Activated naive CD4-positive, alpha-beta T cell treated with anti-CD3 and anti-CD28 coated beads, Interleukin-2, amount 10 ng/mL, durations not matched to agents 7 days and 5 days (primary cell): ENCODE measurements at regions of chr11 and their contacts with region 1.

Region 1: DNA sequence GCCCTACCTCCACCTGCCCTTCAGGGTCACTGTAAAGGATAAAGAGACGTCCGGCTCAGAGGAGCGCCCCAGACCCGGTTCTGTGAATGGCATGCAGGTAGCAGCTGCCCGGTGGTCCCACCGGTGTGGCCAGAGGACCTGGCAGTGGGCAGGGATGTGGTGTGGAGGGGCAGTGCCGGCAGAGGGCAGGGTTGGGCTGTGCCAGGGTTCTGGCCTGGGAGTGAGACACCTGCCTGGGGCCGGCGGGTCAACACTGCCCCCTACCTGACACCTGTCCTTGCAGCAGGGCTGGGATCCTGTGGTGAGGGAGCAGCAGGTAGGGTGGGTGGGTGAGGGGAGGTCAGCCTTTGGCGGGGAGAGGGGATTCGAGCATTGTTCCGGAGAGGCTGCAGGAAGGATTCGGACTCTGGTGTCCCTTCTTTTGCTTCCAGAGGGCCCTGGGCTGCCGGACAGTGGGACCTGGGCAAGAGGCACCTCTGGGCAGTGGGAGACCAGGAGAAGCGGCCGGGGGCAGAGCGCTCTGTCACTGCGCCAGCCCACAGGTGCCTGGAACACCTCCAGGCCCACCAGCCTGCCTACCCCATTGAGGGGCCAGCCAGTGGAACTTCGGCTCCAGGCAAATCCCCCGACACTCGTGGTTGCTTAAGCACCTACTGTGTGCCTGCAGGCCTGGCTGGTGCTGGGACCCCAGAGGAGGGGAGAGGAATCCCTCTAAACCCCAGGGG is 1.6 kb upstream of the PHLDA2 start:
- DNase-seq: peak; percentile 62
- H3K4me3 Mint-ChIP-seq: peak overlapping the region; percentile 51
- H3K27ac Mint-ChIP-seq: no peak overlapping the region
- H3K4me1 Mint-ChIP-seq: peaks cover 40% of the 10 kb centered on the region
- H3K27me3 Mint-ChIP-seq: peaks cover 73% of the 10 kb centered on the region

Region 2: GRCh38 chr11:2420502-2421225 is 510.2 kb before region 1 on chr11:
- CTCF ChIA-PET with region 1: no interaction called
- DNase-seq: peak; percentile 80
- H3K4me3 Mint-ChIP-seq: no peak overlapping the region
- H3K27ac Mint-ChIP-seq: no peak overlapping the region
- H3K4me1 Mint-ChIP-seq: peaks cover 3% of the 10 kb centered on the region
- H3K27me3 Mint-ChIP-seq: no peaks in the 10 kb centered on the region

Region 3: DNA sequence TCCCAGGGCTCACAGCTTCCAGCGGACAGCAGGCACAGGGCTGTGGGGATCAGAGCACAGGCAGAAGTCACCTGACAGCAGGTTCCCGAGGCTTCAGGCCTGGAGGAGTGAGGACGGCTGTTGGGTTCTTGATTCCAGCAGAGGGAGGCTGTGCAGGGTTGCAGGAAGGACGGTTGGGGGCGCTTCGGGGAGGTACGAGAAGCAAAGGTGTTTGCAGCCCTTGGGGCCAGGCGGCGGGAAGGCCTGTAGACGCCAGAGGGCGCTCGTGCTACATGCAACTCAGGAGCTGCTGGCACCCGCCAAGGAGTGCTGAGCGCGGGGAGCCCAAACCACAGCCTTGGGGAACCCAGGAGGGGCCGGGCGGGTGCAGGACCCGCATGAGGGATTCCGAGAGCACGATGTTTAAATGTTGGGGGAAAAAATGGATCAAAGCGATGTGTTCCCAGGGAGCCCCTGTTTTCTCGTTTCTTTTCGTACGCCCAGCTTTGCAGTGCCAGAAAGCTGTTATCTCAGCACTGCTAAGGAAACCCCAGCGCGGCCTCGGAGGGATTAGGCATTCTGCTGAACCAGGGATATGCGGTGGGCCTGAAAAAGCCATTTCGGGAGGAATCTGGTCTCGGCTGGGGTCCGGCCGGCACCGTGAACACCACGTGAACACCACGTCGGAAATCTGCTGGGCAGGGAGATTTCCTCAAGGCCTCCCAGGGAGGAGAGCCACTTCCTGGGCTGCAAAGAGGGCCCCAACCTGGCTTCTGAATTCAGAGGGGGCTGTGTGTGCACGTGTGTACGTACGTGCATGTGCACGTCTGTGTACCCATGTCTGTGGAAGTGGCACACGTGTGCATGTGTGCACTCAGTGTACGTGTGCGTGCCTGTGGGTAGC is 397.9 kb before region 1 on chr11:
- CTCF ChIA-PET with region 1: interaction called, 16 read pairs
- DNase-seq: peak; percentile 95
- H3K4me3 Mint-ChIP-seq: peak overlapping the region; percentile 40
- H3K27ac Mint-ChIP-seq: peak overlapping the region; percentile 76
- H3K4me1 Mint-ChIP-seq: peaks cover 19% of the 10 kb centered on the region
- H3K27me3 Mint-ChIP-seq: peaks cover 5% of the 10 kb centered on the region

Region 4: DNA sequence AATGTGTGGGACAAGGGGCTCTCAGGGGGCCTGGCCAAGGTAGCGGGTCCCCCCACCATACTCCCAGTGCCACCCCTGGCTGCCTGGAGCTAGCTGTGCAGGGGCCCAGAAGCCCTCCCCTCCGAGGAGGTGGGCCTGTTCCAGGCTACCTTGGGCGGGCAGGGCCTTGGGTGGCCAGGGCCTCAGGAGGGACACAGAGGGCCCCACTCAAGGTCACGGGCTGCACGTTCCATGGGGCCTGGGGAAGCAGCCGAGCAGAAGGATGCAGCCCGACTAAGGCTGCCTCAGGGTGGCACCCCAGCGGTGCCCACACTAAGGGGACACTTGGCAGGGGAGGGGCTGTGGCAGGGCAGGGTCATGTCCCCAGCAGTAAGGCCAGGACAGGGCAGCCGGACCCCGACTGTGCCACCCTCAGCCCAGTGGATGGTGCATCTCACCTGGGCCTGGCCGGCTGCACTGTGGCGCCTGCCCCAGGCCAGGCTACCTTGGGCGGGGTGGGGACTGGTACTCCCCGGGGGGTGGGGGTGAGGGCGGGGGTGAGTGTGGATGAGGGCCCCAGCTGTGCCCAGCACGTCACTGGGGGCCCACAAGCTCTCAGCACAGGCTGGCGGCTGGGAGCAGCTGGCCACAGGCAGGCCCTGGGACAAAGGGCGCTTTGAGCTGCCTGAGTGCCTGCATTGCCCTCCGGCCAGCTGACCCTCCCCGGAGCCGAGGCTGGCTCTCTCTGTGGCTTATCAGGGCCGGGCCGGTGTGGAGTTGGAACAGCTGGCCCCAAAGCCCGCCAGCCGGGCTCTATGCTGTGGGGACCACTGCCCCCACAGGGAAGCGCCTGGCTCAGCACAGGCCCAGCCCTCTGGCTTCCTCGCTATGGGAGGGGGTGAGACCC is 368.9 kb before region 1 on chr11:
- CTCF ChIA-PET with region 1: no interaction called
- DNase-seq: no peak
- H3K4me3 Mint-ChIP-seq: no peak overlapping the region
- H3K27ac Mint-ChIP-seq: no peak overlapping the region
- H3K4me1 Mint-ChIP-seq: peaks cover 5% of the 10 kb centered on the region
- H3K27me3 Mint-ChIP-seq: no peaks in the 10 kb centered on the region

Region 5: DNA sequence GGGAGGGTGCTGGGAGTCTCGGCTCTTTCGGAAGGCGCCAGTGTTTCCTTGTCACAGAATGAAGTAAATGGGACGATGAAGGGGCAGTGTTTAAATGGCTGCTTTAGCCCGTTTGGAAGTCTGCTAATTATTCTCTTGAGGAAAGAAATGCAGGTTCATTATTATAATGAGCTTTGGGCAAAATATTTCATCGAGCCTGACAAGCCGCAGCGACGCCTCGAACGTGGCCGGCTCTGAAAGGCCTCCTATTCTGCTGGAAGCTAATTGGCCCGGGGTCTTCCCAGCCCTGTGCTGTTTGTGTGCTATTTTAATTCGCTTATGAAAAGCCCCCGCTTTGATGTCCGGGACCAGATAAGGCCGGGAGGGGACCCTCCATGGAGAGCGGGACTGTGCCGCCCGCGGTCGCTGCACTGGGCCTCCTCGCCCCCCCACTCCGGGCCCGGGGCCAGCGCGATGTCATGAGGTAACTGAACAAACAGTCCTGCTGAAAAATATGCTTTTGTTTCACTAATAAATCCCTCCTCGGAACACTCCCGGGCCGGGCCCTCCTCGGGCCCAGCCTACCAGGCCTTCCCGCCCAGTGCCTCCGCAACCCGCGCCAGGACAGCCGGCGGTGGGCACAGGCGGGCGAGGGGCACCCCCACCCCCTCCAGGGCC is 123.7 kb before region 1 on chr11:
- CTCF ChIA-PET with region 1: no interaction called
- DNase-seq: no peak
- H3K4me3 Mint-ChIP-seq: no peak overlapping the region
- H3K27ac Mint-ChIP-seq: no peak overlapping the region
- H3K4me1 Mint-ChIP-seq: peaks cover 4% of the 10 kb centered on the region
- H3K27me3 Mint-ChIP-seq: peaks cover 4% of the 10 kb centered on the region

Region 6: GRCh38 chr11:2892215-2893020 is 38.4 kb before region 1 on chr11:
- CTCF ChIA-PET with region 1: interaction called, 50 read pairs
- DNase-seq: peak; percentile 90
- H3K4me3 Mint-ChIP-seq: peak overlapping the region; percentile 81
- H3K27ac Mint-ChIP-seq: peak overlapping the region; percentile 86
- H3K4me1 Mint-ChIP-seq: peaks cover 35% of the 10 kb centered on the region
- H3K27me3 Mint-ChIP-seq: peaks cover 19% of the 10 kb centered on the region

Region 7: DNA sequence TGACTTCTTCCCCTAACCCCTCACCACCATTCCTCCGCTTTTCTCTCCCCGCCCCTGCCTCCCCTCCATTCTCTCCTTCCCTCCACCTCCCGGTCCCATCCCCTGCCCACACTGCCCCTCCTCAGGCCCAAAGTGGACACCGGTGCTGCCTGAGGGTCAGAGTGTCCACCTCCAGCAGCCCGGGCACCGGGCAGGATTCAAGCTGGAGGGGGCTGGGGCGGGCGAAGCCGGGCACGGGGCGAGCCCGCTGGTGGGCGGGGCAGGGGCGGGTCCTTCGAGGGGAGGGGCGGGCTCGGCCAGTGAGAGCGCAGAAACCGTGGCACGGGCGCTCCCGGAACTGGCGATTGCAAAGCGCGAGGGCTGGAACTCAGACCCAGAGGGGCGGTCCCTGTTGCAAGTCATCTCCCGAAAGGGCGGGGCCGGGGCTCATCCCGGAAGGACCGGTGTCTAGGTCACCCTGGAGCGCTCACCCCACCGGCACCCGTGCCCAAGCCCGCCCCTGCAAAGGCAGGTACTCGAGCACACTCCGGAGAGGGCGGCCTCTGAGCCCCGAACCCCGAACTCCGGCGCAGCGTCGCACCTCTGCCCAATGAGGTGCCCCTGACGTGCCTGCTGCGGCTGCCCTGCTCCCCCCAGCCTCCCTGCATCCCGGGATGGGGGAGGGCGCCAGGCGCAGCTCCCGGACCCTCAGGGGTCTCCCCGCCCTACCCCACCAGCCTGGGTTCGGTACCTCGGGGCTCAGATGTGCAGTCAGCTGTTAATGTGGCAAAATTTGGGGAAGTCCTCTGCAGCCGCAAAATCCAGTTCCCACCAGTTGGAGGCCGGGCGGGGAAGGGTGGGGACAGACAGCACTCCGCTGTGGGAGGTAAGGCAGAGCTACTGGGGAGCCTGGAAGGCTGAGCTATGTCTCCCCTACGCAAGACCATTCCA is 28.7 kb before region 1 on chr11:
- CTCF ChIA-PET with region 1: interaction called, 10 read pairs
- DNase-seq: peak; percentile 98
- H3K4me3 Mint-ChIP-seq: peak overlapping the region; percentile 72
- H3K27ac Mint-ChIP-seq: peak overlapping the region; percentile 81
- H3K4me1 Mint-ChIP-seq: peaks cover 58% of the 10 kb centered on the region
- H3K27me3 Mint-ChIP-seq: peaks cover 8% of the 10 kb centered on the region

Region 8: GRCh38 chr11:2951231-2952110 is 20.6 kb after region 1 on chr11:
- CTCF ChIA-PET with region 1: interaction called, 15 read pairs
- DNase-seq: no peak
- H3K4me3 Mint-ChIP-seq: no peak overlapping the region
- H3K27ac Mint-ChIP-seq: peak overlapping the region; percentile 56
- H3K4me1 Mint-ChIP-seq: peaks cover 63% of the 10 kb centered on the region
- H3K27me3 Mint-ChIP-seq: no peaks in the 10 kb centered on the region

Region 9: GRCh38 chr11:3030289-3031070 is 99.6 kb after region 1 on chr11:
- CTCF ChIA-PET with region 1: no interaction called
- DNase-seq: no peak
- H3K4me3 Mint-ChIP-seq: no peak overlapping the region
- H3K27ac Mint-ChIP-seq: peak overlapping the region; percentile 1
- H3K4me1 Mint-ChIP-seq: peaks cover 23% of the 10 kb centered on the region
- H3K27me3 Mint-ChIP-seq: no peaks in the 10 kb centered on the region